Ovary (tissue), 10 donors: ENCODE measurements at regions of chr7 and their contacts with region 1.

Region 1: GRCh38 chr7:130277763-130278643 is 11.3 kb downstream of the CPA2 start:
- DNase-seq: peak; percentile 38 to 70 (median 59)
- H3K4me3 ChIP-seq: no peak overlapping the region
- H3K27ac ChIP-seq: no peak overlapping the region
- H3K4me1 ChIP-seq: peaks cover 1% of the 10 kb centered on the region
- H3K27me3 ChIP-seq: no peaks in the 10 kb centered on the region
- CTCF ChIP-seq: peak; percentile 20 to 45 (median 40)
- EP300 ChIP-seq: no peak
- POLR2A ChIP-seq: no peak

Region 2: GRCh38 chr7:130356121-130356875 is 78.3 kb after region 1 on chr7:
- intact Hi-C with region 1: loop called in 1 of 4 experiments (anchors 10 kb)
- DNase-seq: peak; percentile 41 to 64 (median 51)
- H3K4me3 ChIP-seq: no peak overlapping the region
- H3K27ac ChIP-seq: peak overlapping the region; percentile 25 to 32
- H3K4me1 ChIP-seq: peaks cover 21% of the 10 kb centered on the region
- H3K27me3 ChIP-seq: no peaks in the 10 kb centered on the region
- CTCF ChIP-seq: no peak
- EP300 ChIP-seq: no peak
- POLR2A ChIP-seq: no peak

Region 3: GRCh38 chr7:130490888-130491804 is 213.1 kb after region 1 on chr7:
- intact Hi-C with region 1: loop called in 2 of 4 experiments (anchors 5 to 10 kb)
- DNase-seq: peak; percentile 41 to 80 (median 72)
- H3K4me3 ChIP-seq: peak overlapping the region; percentile 38
- H3K27ac ChIP-seq: peak overlapping the region; percentile 27 to 28
- H3K4me1 ChIP-seq: peaks cover 4% of the 10 kb centered on the region
- H3K27me3 ChIP-seq: no peaks in the 10 kb centered on the region
- CTCF ChIP-seq: peak; percentile 43 to 63 (median 57)
- EP300 ChIP-seq: no peak
- POLR2A ChIP-seq: no peak

Region 4: GRCh38 chr7:130648580-130648979 is 370.6 kb after region 1 on chr7:
- intact Hi-C with region 1: no loop called
- DNase-seq: no peak
- H3K4me3 ChIP-seq: no peak overlapping the region
- H3K27ac ChIP-seq: no peak overlapping the region
- H3K4me1 ChIP-seq: no peaks in the 10 kb centered on the region
- H3K27me3 ChIP-seq: no peaks in the 10 kb centered on the region
- CTCF ChIP-seq: no peak
- EP300 ChIP-seq: no peak
- POLR2A ChIP-seq: no peak